CD4-positive, alpha-beta memory T cell (primary cell): ENCODE measurements at regions of chr5 and their contacts with region 1.

Region 1: DNA sequence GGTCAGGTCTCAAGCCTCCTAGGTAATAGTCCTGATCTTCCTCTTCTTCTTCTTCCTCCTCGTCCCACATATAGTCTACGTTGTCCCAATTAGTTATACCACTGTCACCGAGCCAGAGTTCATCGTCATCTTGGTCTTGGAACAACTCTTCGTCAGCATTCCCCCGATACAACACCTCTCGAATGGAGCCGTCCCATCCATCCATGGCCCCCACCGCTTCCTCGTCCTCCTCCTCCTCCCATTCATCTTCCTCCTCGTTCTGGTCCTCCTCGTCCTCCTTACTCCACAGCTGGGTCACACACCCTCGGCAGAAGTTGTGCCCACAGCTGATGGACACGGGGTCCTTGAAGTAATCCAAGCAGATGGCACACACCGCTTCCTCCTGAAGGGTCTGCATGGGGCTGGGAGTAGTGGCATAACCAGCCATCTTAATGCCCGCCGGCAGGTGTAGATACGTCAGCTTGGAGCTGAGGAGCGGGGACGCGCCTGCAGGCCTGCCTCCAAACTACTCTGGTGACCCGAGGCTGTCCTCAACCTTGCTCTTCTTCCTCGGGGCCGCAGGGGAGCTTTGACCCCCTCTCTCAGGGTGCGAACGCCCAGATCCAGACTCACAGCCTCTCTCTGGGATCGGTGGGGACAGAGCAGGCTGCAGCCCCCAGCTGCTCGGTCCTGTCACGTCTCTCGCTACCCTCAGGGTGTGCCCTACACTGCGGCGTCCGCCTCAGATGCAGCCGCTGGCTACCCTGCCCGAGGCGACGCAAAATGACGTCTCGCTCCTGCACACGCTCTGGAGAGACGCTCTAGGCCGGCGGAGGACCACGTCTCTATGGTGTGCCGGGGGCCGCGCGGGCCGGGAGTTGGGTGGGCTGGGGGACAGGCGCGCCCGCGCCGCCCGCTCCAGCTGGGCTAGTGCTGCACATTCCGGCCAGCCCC is at the start of gene TRIM52:
- DNase-seq: peak; percentile 92 to 94 (median 93)
- H3K4me3 ChIP-seq: peak within 1 kb of the TSS; percentile 81 to 94
- H3K4me3 Mint-ChIP-seq: peak within 1 kb of the TSS; percentile 96 to 100 (median 99)
- H3K27ac ChIP-seq: peak within 1 kb of the TSS; percentile 99
- H3K27ac Mint-ChIP-seq: peak within 1 kb of the TSS; percentile 97 to 99 (median 99)
- H3K4me1 ChIP-seq: peaks cover 54% of the 10 kb centered on the region
- H3K4me1 Mint-ChIP-seq: peaks cover 40 to 60% (median 50%) of the 10 kb centered on the region in 4 donors
- H3K27me3 ChIP-seq: no peaks in the 10 kb centered on the region
- H3K27me3 Mint-ChIP-seq: no peaks in the 10 kb centered on the region
- total RNA-seq, gene TRIM52: 73.0 to 76.8 TPM

Region 2: DNA sequence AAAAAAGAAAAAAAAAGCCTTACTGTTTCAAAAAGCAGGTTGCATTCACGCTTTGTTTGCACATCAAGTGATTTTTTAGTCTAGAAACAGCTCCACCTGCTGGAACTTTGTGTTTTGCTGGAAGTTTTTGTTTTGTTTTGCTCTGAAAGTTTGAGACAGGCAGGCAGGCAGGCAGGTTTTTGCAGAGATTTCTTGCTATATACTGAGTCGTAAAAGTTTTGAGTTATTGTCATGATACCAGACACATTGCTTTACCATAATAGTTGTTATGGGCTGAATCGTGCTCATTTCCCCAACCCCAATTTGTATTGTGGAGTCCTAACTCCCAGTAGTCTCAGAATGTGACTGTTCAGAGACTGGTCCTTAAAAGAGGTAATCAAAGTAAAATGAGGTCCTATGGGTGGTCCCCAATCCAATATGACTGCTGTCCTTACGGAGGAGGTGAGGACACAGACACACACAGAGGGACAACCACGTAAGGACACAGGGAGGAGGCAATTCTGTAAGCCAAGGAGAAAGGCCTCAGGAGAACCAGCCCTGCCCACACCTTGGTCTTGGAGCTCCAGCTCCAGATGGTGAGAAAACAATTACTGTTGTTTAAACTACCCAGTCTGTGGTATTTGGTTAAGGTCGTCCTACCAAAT is 541.7 kb before region 1 on chr5:
- CTCF ChIA-PET with region 1: no interaction called
- POLR2A ChIA-PET with region 1: no interaction called
- intact Hi-C with region 1: no loop called
- DNase-seq: peak in 4 of 5 donors; percentile 35 to 45 (median 38)
- H3K4me3 ChIP-seq: no peak overlapping the region
- H3K4me3 Mint-ChIP-seq: no peak overlapping the region
- H3K27ac ChIP-seq: no peak overlapping the region
- H3K27ac Mint-ChIP-seq: peak overlapping the region in 1 of 7 donors; percentile 22
- H3K4me1 ChIP-seq: no peaks in the 10 kb centered on the region
- H3K4me1 Mint-ChIP-seq: peaks cover 0 to 4% (median 3%) of the 10 kb centered on the region in 4 donors
- H3K27me3 ChIP-seq: no peaks in the 10 kb centered on the region
- H3K27me3 Mint-ChIP-seq: peaks cover 17% of the 10 kb centered on the region in 2 donors

Region 3: DNA sequence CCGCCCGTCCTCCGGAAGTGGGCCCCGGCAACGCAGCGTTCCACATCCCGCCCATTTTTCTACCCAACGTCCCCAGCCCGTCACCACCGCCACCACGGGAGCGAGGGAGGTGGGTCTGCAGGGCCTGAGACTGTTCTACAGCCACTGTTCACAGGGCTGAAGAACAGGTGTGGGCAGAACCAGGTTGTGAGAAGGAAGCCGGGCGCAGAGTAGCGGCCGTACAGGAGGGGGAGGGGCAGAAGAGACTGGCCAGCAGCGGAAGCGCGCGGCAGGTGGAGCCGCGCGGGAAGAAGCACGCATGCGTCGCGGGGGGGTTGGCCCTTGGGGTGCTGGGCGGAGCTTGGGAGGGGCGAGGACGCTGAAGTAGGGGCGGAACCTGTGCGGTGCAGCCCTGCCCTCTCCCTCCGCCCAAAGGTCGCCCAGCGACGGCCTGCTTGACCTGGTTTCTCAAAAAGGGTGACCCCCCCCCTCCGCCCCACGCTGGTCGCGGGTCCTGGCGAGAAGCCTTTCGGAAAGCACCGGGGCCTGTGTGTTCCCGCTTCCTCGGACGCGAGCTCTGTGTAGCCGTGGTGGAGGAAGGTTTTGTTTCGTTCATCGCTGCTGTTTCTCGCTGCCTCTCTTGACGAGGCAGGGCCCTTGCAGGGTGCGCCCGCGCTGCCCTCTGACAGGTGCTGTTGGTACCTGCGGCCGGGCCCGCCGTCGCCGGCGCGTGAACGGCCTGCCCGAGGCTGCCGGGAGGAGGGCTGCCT is 450.3 kb before region 1 on chr5:
- CTCF ChIA-PET with region 1: no interaction called
- POLR2A ChIA-PET with region 1: interaction called, 9 read pairs
- intact Hi-C with region 1: loop called (anchors 5 kb)
- DNase-seq: peak; percentile 95 to 99 (median 98)
- H3K4me3 ChIP-seq: peak overlapping the region; percentile 60 to 95
- H3K4me3 Mint-ChIP-seq: peak overlapping the region; percentile 83 to 99 (median 90)
- H3K27ac ChIP-seq: peak overlapping the region; percentile 93
- H3K27ac Mint-ChIP-seq: peak overlapping the region; percentile 92 to 100 (median 99)
- H3K4me1 ChIP-seq: peaks cover 61% of the 10 kb centered on the region
- H3K4me1 Mint-ChIP-seq: peaks cover 53 to 87% (median 69%) of the 10 kb centered on the region in 4 donors
- H3K27me3 ChIP-seq: no peaks in the 10 kb centered on the region
- H3K27me3 Mint-ChIP-seq: no peaks in the 10 kb centered on the region

Region 4: GRCh38 chr5:181181650-181182565 is 78.7 kb before region 1 on chr5:
- CTCF ChIA-PET with region 1: interaction called, 27 read pairs
- POLR2A ChIA-PET with region 1: interaction called, 62 read pairs
- intact Hi-C with region 1: loop called (anchors 1 kb)
- DNase-seq: peak; percentile 65 to 78 (median 76)
- H3K4me3 ChIP-seq: no peak overlapping the region
- H3K4me3 Mint-ChIP-seq: peak overlapping the region; percentile 26 to 94 (median 84)
- H3K27ac ChIP-seq: no peak overlapping the region
- H3K27ac Mint-ChIP-seq: peak overlapping the region; percentile 48 to 95 (median 88)
- H3K4me1 ChIP-seq: peaks cover 14% of the 10 kb centered on the region
- H3K4me1 Mint-ChIP-seq: peaks cover 11 to 42% (median 22%) of the 10 kb centered on the region in 4 donors
- H3K27me3 ChIP-seq: no peaks in the 10 kb centered on the region
- H3K27me3 Mint-ChIP-seq: peaks cover 0 to 2% of the 10 kb centered on the region in 2 donors

Region 5: DNA sequence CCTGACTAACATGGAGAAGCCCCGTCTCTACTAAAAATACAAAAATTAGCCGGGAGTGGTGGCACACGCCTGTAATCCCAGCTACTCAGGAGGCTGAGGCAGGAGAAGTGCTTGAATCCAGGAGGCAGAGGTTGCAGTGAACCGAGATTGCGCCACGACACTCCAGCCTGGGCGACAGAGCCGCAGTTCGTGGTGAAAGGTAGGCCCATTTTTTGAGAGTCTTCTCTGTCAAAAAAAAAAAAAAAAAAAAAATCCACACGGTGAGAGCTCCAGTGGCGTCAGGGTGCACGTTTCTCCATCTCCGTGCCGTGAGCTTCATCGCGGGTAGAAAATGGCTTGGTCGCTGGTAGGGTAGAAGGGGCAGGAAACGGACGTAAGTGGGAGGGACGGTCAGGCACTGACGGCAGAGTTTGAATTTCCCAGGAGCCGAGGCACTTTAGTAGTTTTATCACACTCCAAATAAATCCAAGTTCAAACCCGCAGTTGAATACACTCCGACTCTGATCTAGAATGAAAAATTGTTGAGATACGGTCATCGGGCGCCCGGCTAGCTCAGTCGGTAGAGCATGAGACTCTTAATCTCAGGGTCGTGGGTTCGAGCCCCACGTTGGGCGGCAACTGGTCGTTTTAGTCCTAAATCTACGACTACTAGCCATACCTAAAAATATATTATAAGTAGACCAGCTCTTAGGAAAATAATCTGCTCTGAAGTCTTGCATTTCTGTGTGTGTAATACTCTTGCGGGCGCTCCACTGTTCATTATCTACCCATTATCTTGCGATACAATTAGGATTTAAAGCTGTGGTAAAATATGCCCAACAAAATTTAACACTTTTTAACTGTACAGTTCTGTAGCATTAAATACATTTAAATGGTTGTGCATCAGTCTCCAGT is 53.2 kb before region 1 on chr5:
- CTCF ChIA-PET with region 1: interaction called, 6 read pairs
- POLR2A ChIA-PET with region 1: interaction called, 83 read pairs
- intact Hi-C with region 1: no loop called
- DNase-seq: peak; percentile 76 to 88 (median 81)
- H3K4me3 ChIP-seq: peak overlapping the region; percentile 71
- H3K4me3 Mint-ChIP-seq: peak overlapping the region; percentile 88 to 97 (median 92)
- H3K27ac ChIP-seq: peak overlapping the region; percentile 67
- H3K27ac Mint-ChIP-seq: peak overlapping the region; percentile 91 to 100 (median 98)
- H3K4me1 ChIP-seq: peaks cover 31% of the 10 kb centered on the region
- H3K4me1 Mint-ChIP-seq: peaks cover 24 to 47% (median 32%) of the 10 kb centered on the region in 4 donors
- H3K27me3 ChIP-seq: no peaks in the 10 kb centered on the region
- H3K27me3 Mint-ChIP-seq: peaks cover 7 to 10% of the 10 kb centered on the region in 2 donors

Region 6: GRCh38 chr5:181223058-181223728 is 37.5 kb before region 1 on chr5 and contains the start of gene TRIM41:
- CTCF ChIA-PET with region 1: interaction called, 13 read pairs
- POLR2A ChIA-PET with region 1: interaction called, 215 read pairs
- intact Hi-C with region 1: loop called (anchors 1 kb)
- DNase-seq: peak; percentile 97 to 98 (median 97)
- H3K4me3 ChIP-seq: peak within 1 kb of the TSS; percentile 62 to 90
- H3K4me3 Mint-ChIP-seq: peak within 1 kb of the TSS; percentile 90 to 99 (median 97)
- H3K27ac ChIP-seq: peak within 1 kb of the TSS; percentile 97
- H3K27ac Mint-ChIP-seq: peak within 1 kb of the TSS; percentile 98 to 100 (median 99)
- H3K4me1 ChIP-seq: peaks cover 52% of the 10 kb centered on the region
- H3K4me1 Mint-ChIP-seq: peaks cover 32 to 75% (median 52%) of the 10 kb centered on the region in 4 donors
- H3K27me3 ChIP-seq: no peaks in the 10 kb centered on the region
- H3K27me3 Mint-ChIP-seq: peaks cover 0 to 18% of the 10 kb centered on the region in 2 donors
- total RNA-seq, gene TRIM41: 39.9 to 40.7 TPM

Region 7: GRCh38 chr5:181243512-181244343 is 16.9 kb before region 1 on chr5 and contains the start of gene RACK1:
- CTCF ChIA-PET with region 1: interaction called, 29 read pairs
- POLR2A ChIA-PET with region 1: interaction called, 397 read pairs
- intact Hi-C with region 1: loop called (anchors 1 kb)
- DNase-seq: peak; percentile 90 to 95 (median 91)
- H3K4me3 ChIP-seq: peak within 1 kb of the TSS; percentile 97 to 98
- H3K4me3 Mint-ChIP-seq: peak within 1 kb of the TSS; percentile 93 to 100 (median 98)
- H3K27ac ChIP-seq: peak within 1 kb of the TSS; percentile 96
- H3K27ac Mint-ChIP-seq: peak within 1 kb of the TSS; percentile 96 to 100 (median 99)
- H3K4me1 ChIP-seq: peaks cover 61% of the 10 kb centered on the region
- H3K4me1 Mint-ChIP-seq: peaks cover 42 to 85% (median 63%) of the 10 kb centered on the region in 4 donors
- H3K27me3 ChIP-seq: no peaks in the 10 kb centered on the region
- H3K27me3 Mint-ChIP-seq: no peaks in the 10 kb centered on the region
- total RNA-seq, gene RACK1: 1,956 to 2,001 TPM